ENCODE measurements at regions of chr10 and their contacts with region 1.

Region 1: GRCh38 chr10:100433253-100434240 is 29.3 kb upstream of the WNT8B start:
- DNase-seq: peak; percentile 55
- H3K4me3 ChIP-seq: no peak overlapping the region
- CTCF ChIP-seq: peak; percentile 89

Region 2: GRCh38 chr10:100311307-100311706 is 122.2 kb before region 1 on chr10:
- CTCF ChIA-PET with region 1: interaction called, 15 read pairs
- POLR2A ChIA-PET with region 1: no interaction called
- DNase-seq: no peak
- H3K4me3 ChIP-seq: no peak overlapping the region
- CTCF ChIP-seq: no peak

Region 3: GRCh38 chr10:100338434-100339036 is 95.0 kb before region 1 on chr10:
- CTCF ChIA-PET with region 1: interaction called, 522 read pairs
- POLR2A ChIA-PET with region 1: no interaction called
- DNase-seq: no peak
- H3K4me3 ChIP-seq: no peak overlapping the region
- CTCF ChIP-seq: peak; percentile 91

Region 4: DNA sequence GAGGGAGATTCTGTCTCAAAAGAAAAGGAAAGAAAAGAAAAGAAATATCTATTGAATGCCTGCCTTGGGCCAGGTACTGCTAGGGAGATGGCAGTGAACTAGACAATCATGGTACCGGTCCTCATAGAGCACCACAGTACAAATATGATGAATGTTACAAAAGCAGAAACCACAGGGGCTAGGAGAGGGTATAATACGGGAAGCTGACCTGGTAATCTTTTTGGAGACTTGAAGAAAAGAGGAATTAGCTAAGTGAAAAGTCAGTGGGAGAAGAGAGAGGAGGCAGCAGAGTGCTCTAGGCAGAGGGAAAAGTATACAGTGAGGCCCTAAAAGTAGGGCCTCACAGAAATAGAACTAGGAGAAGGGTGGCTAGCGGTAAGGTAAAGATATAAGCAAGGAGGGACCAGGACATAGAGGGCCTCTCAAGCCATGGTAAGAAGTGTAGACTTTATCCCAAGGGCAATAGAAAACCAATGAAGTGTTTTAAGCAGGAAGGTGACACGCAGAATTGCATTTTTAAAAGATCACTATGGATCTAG is 13.6 kb before region 1 on chr10:
- CTCF ChIA-PET with region 1: interaction called, 52 read pairs
- POLR2A ChIA-PET with region 1: no interaction called
- DNase-seq: no peak
- H3K4me3 ChIP-seq: no peak overlapping the region
- CTCF ChIP-seq: no peak

Region 5: GRCh38 chr10:100501423-100501822 is 67.9 kb after region 1 on chr10:
- CTCF ChIA-PET with region 1: interaction called, 555 read pairs
- POLR2A ChIA-PET with region 1: interaction called, 3 read pairs
- DNase-seq: no peak
- H3K4me3 ChIP-seq: no peak overlapping the region
- CTCF ChIP-seq: no peak

Region 6: DNA sequence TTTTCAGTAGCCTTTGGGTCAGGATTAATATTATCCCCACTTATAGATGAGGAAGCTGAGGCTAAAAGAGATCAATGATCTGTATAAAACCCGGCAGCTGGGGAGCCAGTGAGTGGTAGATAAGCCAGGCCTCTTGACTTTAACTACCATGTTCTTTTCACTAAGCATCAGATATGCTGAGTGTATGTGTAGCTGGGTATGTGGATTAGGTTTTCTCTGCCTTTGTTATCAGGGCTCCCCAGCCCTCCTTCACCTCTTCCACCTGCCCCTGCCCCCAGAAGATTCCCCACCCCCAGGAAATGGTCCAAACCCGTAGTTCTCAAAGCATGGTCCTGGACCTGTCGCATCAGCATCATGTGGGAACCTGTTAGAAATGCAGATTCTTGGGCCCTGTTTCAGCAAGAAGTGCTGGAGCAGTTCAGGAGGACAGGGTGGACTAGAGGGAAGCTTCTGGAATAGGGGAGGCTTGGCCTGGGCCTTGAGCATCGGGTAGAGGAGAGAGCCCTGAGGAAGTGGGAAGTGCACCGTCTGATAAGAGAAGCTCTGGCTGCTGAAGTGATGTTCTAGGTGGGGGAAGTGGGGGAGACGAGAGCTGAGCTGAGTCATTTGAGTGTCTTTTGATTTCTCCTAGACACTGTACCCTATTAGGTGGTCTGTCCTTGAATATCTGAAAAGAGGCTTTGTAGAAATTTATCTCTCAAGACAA is 203.5 kb after region 1 on chr10:
- CTCF ChIA-PET with region 1: no interaction called
- POLR2A ChIA-PET with region 1: no interaction called
- DNase-seq: no peak
- H3K4me3 ChIP-seq: no peak overlapping the region
- CTCF ChIP-seq: no peak

Region 7: GRCh38 chr10:100878291-100878910 is 444.9 kb after region 1 on chr10:
- CTCF ChIA-PET with region 1: interaction called, 31 read pairs
- POLR2A ChIA-PET with region 1: no interaction called
- DNase-seq: no peak
- H3K4me3 ChIP-seq: no peak overlapping the region
- CTCF ChIP-seq: peak; percentile 83

Measured in AG04449 (cell line).